RWPE1 (cell line): ENCODE measurements at regions of chr2 and their contacts with region 1.

Region 1: DNA sequence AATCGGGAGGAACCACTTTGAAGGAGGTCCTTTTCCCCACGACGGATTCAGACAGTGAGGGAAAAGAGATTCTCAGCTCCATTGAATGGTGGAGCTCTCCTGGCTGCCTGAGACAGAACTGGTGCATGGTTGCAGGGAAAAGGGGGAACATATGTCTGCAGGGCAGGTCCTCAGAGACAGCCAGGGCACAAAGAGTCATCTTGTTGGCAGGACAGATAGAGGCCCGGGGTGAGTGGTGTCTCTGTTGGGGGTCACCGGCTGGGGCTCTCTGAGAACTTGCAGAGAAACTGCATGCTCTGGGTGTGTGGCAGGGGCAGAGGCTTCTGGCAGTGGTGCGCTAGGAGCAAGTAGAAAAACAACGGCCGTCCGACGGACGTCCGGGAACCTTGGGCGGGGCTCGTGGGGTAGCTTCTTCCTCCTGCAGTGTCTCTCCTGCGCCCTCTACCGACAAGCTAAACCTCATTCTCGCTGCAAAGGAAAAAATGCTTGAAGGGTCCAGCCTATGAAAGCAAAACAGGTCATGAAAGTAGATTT is 94.3 kb downstream of the CDCA7 start:
- DNase-seq: peak; percentile 73
- H3K27ac ChIP-seq: peak overlapping the region; percentile 63
- CTCF ChIP-seq: peak; percentile 84

Region 2: DNA sequence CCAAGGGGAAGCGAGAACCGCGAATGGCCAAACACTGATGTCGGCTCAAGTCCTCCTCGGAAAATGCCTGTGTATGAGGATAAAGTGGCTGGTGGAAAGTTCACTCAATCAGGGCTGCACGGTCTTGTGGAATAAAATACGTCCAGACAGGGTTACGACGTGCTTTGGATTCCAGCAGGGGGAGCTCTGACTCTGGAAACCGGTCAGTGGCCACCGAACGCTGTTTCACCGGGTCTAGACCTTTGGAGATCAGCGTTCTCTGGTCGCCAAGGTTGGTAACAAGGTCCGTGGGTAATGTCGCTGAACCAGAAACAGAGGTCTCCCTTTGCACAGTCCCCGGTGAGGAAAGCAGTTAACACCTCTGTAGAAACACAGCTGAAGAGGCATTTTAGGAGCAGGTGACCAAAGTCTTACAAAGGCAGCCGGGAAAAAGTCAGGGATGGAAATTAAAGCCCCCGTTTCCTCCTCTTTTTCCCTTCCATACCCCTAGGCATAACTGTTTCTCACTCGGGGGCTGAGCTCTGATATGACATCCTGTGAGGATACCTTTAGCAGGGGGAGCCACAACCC is 46.5 kb before region 1 on chr2:
- CTCF ChIA-PET with region 1: interaction called, 58 read pairs
- POLR2A ChIA-PET with region 1: no interaction called
- DNase-seq: peak; percentile 84
- H3K27ac ChIP-seq: no peak overlapping the region
- CTCF ChIP-seq: peak; percentile 85

Region 3: GRCh38 chr2:173427887-173428600 is 21.0 kb before region 1 on chr2:
- CTCF ChIA-PET with region 1: interaction called, 10 read pairs
- POLR2A ChIA-PET with region 1: interaction called, 4 read pairs
- DNase-seq: peak; percentile 88
- H3K27ac ChIP-seq: peak overlapping the region; percentile 95
- CTCF ChIP-seq: no peak